MCF 10A (cell line): ENCODE measurements at regions of chr5 and their contacts with region 1.

Region 1: GRCh38 chr5:164204338-164204946 is 699.0 kb downstream of the MAT2B start:
- DNase-seq: peak; percentile 95
- H3K4me3 Mint-ChIP-seq: no peak overlapping the region
- H3K27ac Mint-ChIP-seq: peak overlapping the region; percentile 92
- H3K4me1 Mint-ChIP-seq: peaks cover 47% of the 10 kb centered on the region
- H3K27me3 Mint-ChIP-seq: no peaks in the 10 kb centered on the region
- CTCF ChIP-seq: no peak

Region 2: GRCh38 chr5:164235300-164235891 is 31.0 kb after region 1 on chr5:
- CTCF ChIA-PET with region 1: no interaction called
- POLR2A ChIA-PET with region 1: interaction called, 6 read pairs
- intact Hi-C with region 1: loop called (anchors 1 kb)
- DNase-seq: peak; percentile 93
- H3K4me3 Mint-ChIP-seq: no peak overlapping the region
- H3K27ac Mint-ChIP-seq: no peak overlapping the region
- H3K4me1 Mint-ChIP-seq: peaks cover 28% of the 10 kb centered on the region
- H3K27me3 Mint-ChIP-seq: no peaks in the 10 kb centered on the region
- CTCF ChIP-seq: no peak

Region 3: GRCh38 chr5:164265566-164265965 is 61.1 kb after region 1 on chr5:
- CTCF ChIA-PET with region 1: no interaction called
- POLR2A ChIA-PET with region 1: no interaction called
- intact Hi-C with region 1: no loop called
- DNase-seq: no peak
- H3K4me3 Mint-ChIP-seq: no peak overlapping the region
- H3K27ac Mint-ChIP-seq: no peak overlapping the region
- H3K4me1 Mint-ChIP-seq: no peaks in the 10 kb centered on the region
- H3K27me3 Mint-ChIP-seq: no peaks in the 10 kb centered on the region
- CTCF ChIP-seq: no peak